Left ventricle myocardium superior (tissue), 1 donor: ENCODE measurements at regions of chr19 and their contacts with region 1.

Region 1: DNA sequence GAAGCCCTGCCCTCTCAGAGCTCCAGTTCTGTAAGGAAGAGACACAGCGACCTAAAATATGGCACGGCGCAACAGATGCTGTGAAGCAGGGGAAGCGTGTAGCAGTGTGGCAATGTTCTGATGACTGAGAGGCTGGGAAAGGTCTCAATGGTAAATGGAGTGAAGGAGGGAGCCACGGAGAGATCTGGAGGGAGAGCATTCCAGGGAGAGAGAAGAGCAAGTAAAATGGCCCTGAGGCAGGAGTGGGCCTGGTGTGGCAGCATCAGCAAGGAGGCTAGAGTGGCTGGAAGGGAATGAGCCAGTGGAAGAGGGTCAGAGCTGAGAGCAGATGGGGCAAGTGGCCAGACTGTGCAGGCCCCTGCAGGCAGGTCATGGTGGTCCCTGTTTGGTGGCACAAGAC is 16.4 kb downstream of the RCN3 start:
- DNase-seq: no peak
- ATAC-seq: no peak

Region 2: GRCh38 chr19:49506575-49507105 is 37.5 kb before region 1 on chr19:
- intact Hi-C with region 1: loop called (anchors 5 kb)
- DNase-seq: peak; percentile 52
- ATAC-seq: peak; percentile 64